Right ventricle myocardium superior (tissue), 1 donor: ENCODE measurements at regions of chr3 and their contacts with region 1.

Region 1: GRCh38 chr3:142279965-142280590 is 54.7 kb upstream of the GK5 start:
- DNase-seq: no peak
- ATAC-seq: peak; percentile 94

Region 2: DNA sequence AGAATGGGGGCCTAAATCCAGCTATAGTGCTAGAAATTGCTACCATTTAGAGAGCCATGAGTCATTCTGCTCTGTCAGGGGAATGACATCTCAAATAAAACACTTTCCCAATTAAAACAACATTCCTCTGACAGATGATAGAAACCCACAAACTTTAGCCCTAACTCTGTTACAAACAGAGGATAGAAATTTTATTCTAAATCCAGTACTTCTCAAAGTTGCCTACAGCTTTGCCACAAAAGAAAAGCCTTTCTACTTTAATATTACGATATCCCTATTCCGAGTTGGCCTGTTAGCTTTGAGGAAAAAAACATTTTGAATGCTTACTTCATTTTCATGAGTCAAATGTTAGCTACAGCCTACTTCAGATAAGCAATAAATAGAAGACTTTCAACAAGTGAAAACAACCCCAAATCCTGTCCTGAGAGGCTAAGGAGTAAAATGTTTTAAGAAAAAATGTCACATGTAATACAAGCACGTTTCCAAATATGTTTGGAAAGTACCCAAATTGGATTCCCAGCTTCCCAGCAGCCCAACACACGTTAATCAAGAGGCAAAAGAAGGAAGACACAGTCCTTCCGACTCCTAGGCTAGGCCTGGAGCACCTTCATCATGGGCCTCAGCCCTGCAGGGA is 320.0 kb before region 1 on chr3:
- intact Hi-C with region 1: loop called (anchors 5 kb)
- DNase-seq: no peak
- ATAC-seq: peak; percentile 55

Region 3: DNA sequence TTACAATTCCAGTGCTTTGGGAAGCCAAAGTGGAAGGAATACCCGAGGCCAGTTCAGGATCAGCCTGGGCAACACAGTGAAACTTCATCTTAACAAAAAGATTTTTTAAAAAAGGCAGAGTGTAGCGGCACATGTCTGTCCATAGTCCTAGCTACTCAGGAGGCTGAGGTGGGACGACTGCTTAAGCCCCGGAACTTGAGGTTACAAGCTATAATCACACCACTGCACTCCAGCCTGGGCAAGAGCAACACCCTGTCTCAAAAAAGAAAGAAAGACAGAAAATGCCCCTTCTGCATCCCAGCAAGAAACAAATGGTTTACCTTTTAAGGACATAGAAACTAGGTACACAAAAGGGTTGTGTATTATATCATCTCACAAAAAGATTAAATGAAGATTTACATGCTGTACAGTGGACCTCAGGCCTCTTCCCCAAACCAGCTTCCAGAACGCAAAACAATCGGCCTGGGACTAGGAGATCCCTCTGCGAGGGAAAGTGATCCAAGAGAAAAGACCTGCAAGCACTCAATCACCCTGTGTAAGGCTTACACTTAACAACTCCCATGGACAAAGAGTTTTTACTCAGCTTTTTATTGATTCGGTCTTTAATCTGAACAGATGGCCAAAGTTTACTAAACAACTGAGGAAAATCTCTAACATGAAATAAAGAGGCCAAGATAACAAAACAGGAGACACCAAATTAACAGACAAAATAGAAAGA is 152.0 kb before region 1 on chr3:
- intact Hi-C with region 1: loop called (anchors 2 kb)
- DNase-seq: no peak
- ATAC-seq: no peak